CD14-positive monocyte (primary cell): ENCODE measurements at regions of chr14 and their contacts with region 1.

Region 1: GRCh38 chr14:70907176-70907995 is at the start of gene PCNX1:
- DNase-seq: peak; percentile 76 to 82 (median 80)
- H3K4me3 ChIP-seq: peak within 1 kb of the TSS; percentile 80 to 87 (median 84)
- H3K4me3 Mint-ChIP-seq: peak within 1 kb of the TSS; percentile 88 to 96
- H3K27ac ChIP-seq: peak within 1 kb of the TSS; percentile 83 to 90
- H3K27ac Mint-ChIP-seq: peak within 1 kb of the TSS; percentile 82 to 94 (median 91)
- H3K4me1 ChIP-seq: peaks cover 39 to 46% of the 10 kb centered on the region in 2 donors
- H3K4me1 Mint-ChIP-seq: peaks cover 47% of the 10 kb centered on the region
- H3K27me3 ChIP-seq: no peaks in the 10 kb centered on the region
- H3K27me3 Mint-ChIP-seq: peaks cover 0 to 2% (median 0%) of the 10 kb centered on the region in 3 donors
- CTCF ChIP-seq: peak; percentile 85
- polyA plus RNA-seq, gene PCNX1: 7.3 to 26.7 (median 8.1) TPM

Region 2: GRCh38 chr14:70821584-70822529 is 85.5 kb before region 1 on chr14:
- intact Hi-C with region 1: loop called (anchors 5 kb)
- DNase-seq: peak; percentile 37 to 53 (median 39)
- H3K4me3 ChIP-seq: peak overlapping the region; percentile 24 to 81 (median 37)
- H3K4me3 Mint-ChIP-seq: peak overlapping the region; percentile 80 to 87
- H3K27ac ChIP-seq: no peak overlapping the region
- H3K27ac Mint-ChIP-seq: peak overlapping the region in 1 of 7 donors; percentile 52
- H3K4me1 ChIP-seq: peaks cover 10 to 20% of the 10 kb centered on the region in 2 donors
- H3K4me1 Mint-ChIP-seq: peaks cover 20% of the 10 kb centered on the region
- H3K27me3 ChIP-seq: peaks cover 31 to 59% of the 10 kb centered on the region in 2 donors
- H3K27me3 Mint-ChIP-seq: peaks cover 38 to 59% (median 57%) of the 10 kb centered on the region in 3 donors
- CTCF ChIP-seq: no peak

Region 3: GRCh38 chr14:70873627-70874026 is 33.8 kb before region 1 on chr14:
- intact Hi-C with region 1: loop called in 1 of 2 experiments (anchors 5 kb)
- DNase-seq: peak; percentile 35 to 65 (median 51)
- H3K4me3 ChIP-seq: no peak overlapping the region
- H3K4me3 Mint-ChIP-seq: no peak overlapping the region
- H3K27ac ChIP-seq: no peak overlapping the region
- H3K27ac Mint-ChIP-seq: peak overlapping the region in 2 of 7 donors; percentile 27 to 80
- H3K4me1 ChIP-seq: peaks cover 2 to 14% of the 10 kb centered on the region in 2 donors
- H3K4me1 Mint-ChIP-seq: peaks cover 13% of the 10 kb centered on the region
- H3K27me3 ChIP-seq: no peaks in the 10 kb centered on the region
- H3K27me3 Mint-ChIP-seq: peaks cover 0 to 3% (median 0%) of the 10 kb centered on the region in 3 donors
- CTCF ChIP-seq: peak; percentile 49

Region 4: GRCh38 chr14:70962935-70963334 is 55.5 kb after region 1 on chr14:
- intact Hi-C with region 1: loop called in 1 of 2 experiments (anchors 10 kb)
- DNase-seq: no peak
- H3K4me3 ChIP-seq: no peak overlapping the region
- H3K4me3 Mint-ChIP-seq: no peak overlapping the region
- H3K27ac ChIP-seq: no peak overlapping the region
- H3K27ac Mint-ChIP-seq: peak overlapping the region in 1 of 7 donors; percentile 47
- H3K4me1 ChIP-seq: no peaks in the 10 kb centered on the region
- H3K4me1 Mint-ChIP-seq: no peaks in the 10 kb centered on the region
- H3K27me3 ChIP-seq: no peaks in the 10 kb centered on the region
- H3K27me3 Mint-ChIP-seq: peaks cover 0 to 3% (median 0%) of the 10 kb centered on the region in 3 donors
- CTCF ChIP-seq: no peak